Transverse colon (tissue), 4 donors: ENCODE measurements at regions of chr5 and their contacts with region 1.

Region 1: GRCh38 chr5:107402434-107403227 is 268.1 kb downstream of the EFNA5 start:
- DNase-seq: no peak
- H3K4me3 ChIP-seq: no peak overlapping the region
- H3K27ac ChIP-seq: no peak overlapping the region
- H3K4me1 ChIP-seq: peaks cover 0 to 7% (median 0%) of the 10 kb centered on the region in 4 donors
- H3K27me3 ChIP-seq: no peaks in the 10 kb centered on the region
- CTCF ChIP-seq: no peak
- EP300 ChIP-seq: no peak
- POLR2A ChIP-seq: no peak

Region 2: DNA sequence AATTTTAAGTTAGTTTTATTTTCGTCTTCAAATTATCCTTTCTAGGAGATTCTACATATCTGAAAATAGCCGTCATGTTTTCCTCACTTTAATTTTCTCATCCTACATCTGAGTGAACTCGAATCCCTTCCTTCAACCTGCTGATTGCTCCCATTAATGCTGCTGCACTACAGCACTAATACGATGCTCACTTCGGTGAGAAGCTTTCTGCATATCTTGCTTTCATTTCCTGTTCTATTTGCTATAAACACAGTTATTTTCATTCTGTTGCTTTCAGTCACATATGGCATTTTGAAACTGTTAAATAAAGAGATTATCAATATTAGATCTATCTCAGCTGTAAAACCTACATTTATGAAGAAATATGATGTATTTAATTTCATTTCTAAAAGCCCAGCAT is 481.1 kb before region 1 on chr5:
- in situ Hi-C with region 1: no loop called
- intact Hi-C with region 1: no loop called
- DNase-seq: no peak
- H3K4me3 ChIP-seq: no peak overlapping the region
- H3K27ac ChIP-seq: no peak overlapping the region
- H3K4me1 ChIP-seq: no peaks in the 10 kb centered on the region
- H3K27me3 ChIP-seq: no peaks in the 10 kb centered on the region
- CTCF ChIP-seq: no peak
- EP300 ChIP-seq: no peak
- POLR2A ChIP-seq: no peak

Region 3: DNA sequence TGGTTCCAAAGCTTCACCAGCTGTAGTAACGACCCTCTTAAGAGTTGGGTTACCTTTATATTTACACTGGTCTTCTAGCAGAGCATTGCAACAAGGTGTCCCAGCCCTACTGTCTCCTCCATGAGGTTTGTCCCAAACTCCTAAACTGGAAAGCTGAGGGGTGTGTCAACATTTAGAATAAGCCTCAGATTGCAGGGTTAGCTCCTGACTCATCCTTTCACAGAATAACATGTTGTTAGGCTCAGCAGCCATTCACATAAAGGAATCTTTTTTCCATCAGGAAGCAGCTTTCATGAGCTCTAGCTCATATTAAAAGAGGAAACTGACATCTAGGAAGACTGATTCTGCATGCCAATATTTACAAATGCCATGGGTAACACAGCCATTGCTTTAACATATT is 29.4 kb after region 1 on chr5:
- in situ Hi-C with region 1: no loop called
- intact Hi-C with region 1: loop called (anchors 2 kb)
- DNase-seq: no peak
- H3K4me3 ChIP-seq: no peak overlapping the region
- H3K27ac ChIP-seq: peak overlapping the region in 1 of 4 donors; percentile 10
- H3K4me1 ChIP-seq: peaks cover 4 to 24% (median 9%) of the 10 kb centered on the region in 4 donors
- H3K27me3 ChIP-seq: no peaks in the 10 kb centered on the region
- CTCF ChIP-seq: no peak
- EP300 ChIP-seq: no peak
- POLR2A ChIP-seq: no peak